Psoas muscle (tissue), 8 donors: ENCODE measurements at regions of chr9 and their contacts with region 1.

Region 1: DNA sequence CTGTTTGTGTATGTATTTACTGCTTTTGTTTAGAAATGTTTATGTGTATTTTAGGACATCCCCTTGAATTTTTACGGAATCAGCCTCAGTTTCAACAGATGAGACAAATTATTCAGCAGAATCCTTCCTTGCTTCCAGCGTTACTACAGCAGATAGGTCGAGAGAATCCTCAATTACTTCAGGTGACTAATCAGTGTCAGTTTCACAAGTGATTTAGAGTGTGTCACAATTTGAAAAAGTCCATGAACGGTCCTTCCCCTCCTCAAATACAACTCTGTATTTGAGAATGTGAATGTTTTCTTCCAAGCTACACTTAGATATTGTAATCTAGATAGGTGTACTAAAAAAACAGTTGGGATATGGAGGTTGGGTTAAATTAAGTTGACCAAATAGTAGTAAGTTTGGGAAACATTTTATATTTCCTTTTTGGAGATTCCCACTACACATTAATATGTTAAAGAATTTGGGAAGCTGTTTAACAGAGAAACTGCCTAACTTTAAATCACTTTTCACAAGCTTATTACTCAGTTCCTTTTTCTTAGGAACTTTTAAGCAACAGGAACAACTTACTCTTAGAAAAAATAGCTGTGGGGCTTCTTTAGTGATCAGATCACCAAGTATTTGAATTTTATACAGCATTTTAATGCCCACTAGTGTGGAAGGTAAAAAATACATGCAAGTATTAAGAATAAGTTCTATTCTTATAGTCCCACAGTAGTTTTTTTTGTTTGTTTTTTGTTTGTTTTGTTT is 40.9 kb downstream of the RAD23B start:
- DNase-seq: no peak
- ATAC-seq: peak in 3 of 4 donors; percentile 37 to 55 (median 54)
- H3K4me3 ChIP-seq: no peak overlapping the region
- H3K27ac ChIP-seq: no peak overlapping the region
- H3K4me1 ChIP-seq: peaks cover 16% of the 10 kb centered on the region
- H3K27me3 ChIP-seq: no peaks in the 10 kb centered on the region
- CTCF ChIP-seq: no peak

Region 2: GRCh38 chr9:107243751-107244150 is 80.3 kb before region 1 on chr9:
- intact Hi-C with region 1: no loop called
- DNase-seq: no peak
- ATAC-seq: peak in 3 of 4 donors; percentile 54 to 67 (median 61)
- H3K4me3 ChIP-seq: no peak overlapping the region
- H3K27ac ChIP-seq: no peak overlapping the region
- H3K4me1 ChIP-seq: peaks cover 14% of the 10 kb centered on the region
- H3K27me3 ChIP-seq: peaks cover 0 to 2% (median 0%) of the 10 kb centered on the region in 3 donors
- CTCF ChIP-seq: no peak

Region 3: GRCh38 chr9:107282753-107283625 is 41.0 kb before region 1 on chr9 and contains the start of gene RAD23B:
- intact Hi-C with region 1: loop called in 1 of 2 experiments (anchors 5 kb)
- DNase-seq: peak; percentile 99 to 100
- ATAC-seq: peak; percentile 92 to 96 (median 94)
- H3K4me3 ChIP-seq: peak within 1 kb of the TSS; percentile 94
- H3K27ac ChIP-seq: peak within 1 kb of the TSS; percentile 100
- H3K4me1 ChIP-seq: peaks cover 24% of the 10 kb centered on the region
- H3K27me3 ChIP-seq: no peaks in the 10 kb centered on the region
- CTCF ChIP-seq: no peak
- total RNA-seq, gene RAD23B: 175 to 258 (median 233) TPM

Region 4: GRCh38 chr9:107335331-107335730 is 11.3 kb after region 1 on chr9:
- intact Hi-C with region 1: loop called in 1 of 2 experiments (anchors 1 kb)
- DNase-seq: no peak
- ATAC-seq: no peak
- H3K4me3 ChIP-seq: no peak overlapping the region
- H3K27ac ChIP-seq: no peak overlapping the region
- H3K4me1 ChIP-seq: peaks cover 18% of the 10 kb centered on the region
- H3K27me3 ChIP-seq: no peaks in the 10 kb centered on the region
- CTCF ChIP-seq: no peak